AG04449 (cell line): ENCODE measurements at regions of chr2 and their contacts with region 1.

Region 1: DNA sequence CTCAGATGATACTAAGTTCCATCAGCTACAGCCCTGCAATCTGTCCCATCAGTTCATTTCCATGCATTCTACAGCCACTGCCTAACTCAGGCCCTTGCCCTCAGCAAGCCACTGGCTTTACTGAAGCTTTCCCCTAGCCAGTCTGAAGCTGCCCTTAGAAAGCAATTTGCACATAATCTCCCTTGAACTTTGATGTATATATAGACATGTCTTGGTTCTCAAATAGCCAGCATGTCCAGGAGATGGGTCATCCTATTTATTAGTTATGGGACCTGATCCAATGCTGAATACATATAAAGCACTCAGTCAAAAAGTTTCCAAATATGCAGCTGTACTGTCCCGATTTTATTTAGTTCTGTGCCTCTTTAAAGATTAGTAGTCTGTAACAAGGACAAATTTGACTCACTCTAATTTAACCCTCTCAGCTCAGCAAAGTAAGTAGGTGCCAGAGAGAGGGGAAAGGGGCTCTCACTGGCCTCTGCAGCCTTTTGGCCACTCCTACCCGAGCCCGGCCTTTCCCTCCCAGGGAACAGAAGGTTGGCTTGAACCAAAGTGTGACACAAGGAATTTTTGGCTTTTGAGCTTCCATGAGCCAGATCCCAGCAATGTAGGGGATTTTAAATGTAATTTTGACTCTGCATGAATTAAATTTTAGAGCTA is 70.7 kb downstream of the CCDC93 start:
- DNase-seq: peak; percentile 79
- H3K4me3 ChIP-seq: no peak overlapping the region
- CTCF ChIP-seq: no peak

Region 2: DNA sequence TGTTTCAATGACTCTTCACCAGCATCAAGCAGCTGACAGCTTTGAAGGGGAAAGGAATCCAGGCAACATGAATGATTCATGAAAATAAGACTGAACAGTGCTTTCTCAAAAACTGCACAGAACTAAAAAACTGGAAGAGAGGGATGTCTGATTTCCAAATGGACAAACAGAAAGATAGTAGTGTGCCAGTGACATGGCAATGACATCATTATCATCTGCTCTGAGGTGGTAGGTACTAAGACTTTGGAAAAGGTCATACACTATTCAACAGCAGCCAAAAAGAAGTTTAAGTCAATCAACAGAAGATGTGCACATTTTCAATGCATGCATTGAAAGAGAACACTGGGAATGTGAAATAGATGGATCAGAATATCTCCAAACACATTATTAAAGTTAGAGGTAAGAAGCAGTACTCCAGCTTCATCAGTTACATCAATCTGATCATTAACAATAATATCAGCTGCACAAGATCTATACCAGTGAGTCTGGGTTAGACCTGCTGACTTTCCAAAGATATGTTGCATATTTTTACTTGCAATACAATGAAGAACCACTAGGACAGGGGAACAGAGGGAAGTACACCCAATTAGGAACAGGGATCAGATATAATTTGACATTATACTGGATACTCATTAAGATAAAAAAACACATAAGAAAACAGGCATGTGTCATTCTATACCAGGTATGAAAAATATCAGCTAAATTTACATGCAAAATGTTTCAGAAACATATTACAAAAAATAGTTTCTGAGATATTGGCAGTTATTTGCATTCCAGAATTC is 1124.0 kb before region 1 on chr2:
- CTCF ChIA-PET with region 1: no interaction called
- POLR2A ChIA-PET with region 1: no interaction called
- DNase-seq: no peak
- H3K4me3 ChIP-seq: no peak overlapping the region
- CTCF ChIP-seq: no peak

Region 3: DNA sequence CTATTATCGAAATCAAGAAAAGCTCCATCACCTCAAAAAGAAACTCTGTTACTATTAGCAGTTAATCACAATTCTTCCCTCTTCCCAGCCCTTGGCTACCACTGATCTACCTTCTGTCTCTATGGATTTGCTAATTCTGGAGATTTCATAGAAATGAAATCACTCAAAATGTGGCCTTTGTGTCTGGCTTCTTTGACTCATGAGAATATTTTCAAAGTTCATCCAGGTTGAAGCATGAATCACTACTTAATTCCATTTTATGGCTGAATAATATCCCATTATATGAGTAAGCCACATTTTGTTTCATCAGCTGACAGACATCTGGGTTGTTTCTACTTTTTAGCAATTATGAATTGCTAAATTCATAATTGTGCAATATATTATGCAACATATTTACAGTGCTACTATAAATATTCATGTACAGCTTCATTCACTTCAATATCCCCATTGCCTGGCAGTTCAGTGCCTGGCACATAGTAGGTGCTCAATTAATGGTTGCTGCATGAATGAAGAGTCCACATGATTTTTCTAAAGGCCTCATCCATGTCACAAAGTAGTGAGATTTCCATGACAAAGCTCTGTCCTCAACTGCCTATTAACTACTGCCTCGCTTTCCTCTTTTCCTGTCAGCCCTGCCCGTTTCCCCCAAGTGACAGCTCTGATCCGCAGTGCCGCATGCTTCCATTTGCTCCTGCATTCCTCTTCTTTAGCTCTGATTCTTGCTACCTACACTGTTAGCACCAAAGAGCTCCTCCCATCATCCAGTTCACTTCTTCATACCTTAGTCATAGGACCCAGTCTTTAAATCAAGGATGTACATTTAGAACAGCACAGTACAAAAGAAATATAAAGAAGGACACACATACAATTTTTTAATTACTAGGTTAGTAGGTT is 37.9 kb after region 1 on chr2:
- CTCF ChIA-PET with region 1: no interaction called
- POLR2A ChIA-PET with region 1: interaction called, 15 read pairs
- DNase-seq: peak; percentile 81
- H3K4me3 ChIP-seq: no peak overlapping the region
- CTCF ChIP-seq: no peak